ENCODE measurements at regions of chr19 and their contacts with region 1.

Region 1: DNA sequence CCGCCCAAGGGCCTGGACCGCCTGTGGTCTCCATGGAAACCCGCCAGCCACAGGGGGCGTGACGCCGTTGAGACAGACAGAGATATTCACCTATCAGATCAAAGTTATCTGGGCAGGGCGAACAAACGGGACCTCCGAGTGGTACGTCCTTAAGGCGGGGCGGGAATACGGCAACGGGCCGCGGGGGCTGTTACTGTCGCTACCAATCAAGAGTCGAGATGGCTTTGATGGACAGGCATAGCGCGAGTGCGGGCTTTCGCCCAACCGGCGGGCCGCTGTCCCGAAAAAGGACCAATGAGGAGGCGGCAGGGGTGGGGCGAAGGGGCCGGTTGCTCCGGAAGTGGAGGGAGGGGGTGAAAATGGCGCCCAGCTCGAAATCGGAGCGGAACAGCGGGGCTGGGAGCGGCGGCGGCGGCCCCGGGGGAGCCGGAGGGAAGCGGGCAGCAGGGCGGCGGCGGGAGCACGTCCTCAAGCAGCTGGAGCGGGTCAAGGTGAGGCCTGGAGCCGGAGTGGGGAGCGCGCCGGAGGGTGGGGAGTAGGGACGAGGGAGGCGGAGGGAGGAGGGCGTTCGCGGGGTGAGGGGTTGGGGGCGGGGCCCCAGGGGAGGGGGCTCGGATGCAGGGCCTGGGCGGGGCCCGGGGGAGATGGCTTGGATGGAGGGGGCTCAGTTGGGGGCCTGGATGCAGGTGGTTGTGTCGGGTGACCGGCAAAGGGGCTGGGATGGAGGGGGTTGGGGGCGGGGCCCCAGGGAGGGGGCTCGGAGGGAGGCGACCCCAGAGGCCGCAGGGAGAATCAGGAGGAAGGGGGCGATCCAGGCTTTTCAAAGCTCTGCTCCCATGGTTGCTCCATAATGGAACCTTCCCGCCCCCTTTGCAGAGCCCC is at the start of gene DCAF15:
- DNase-seq: peak; percentile 99
- H3K4me3 ChIP-seq: peak within 1 kb of the TSS; percentile 90
- H3K27ac ChIP-seq: no peak within 1 kb of the TSS
- H3K4me1 ChIP-seq: peaks cover 4% of the 10 kb centered on the region
- H3K27me3 ChIP-seq: no peaks in the 10 kb centered on the region
- CTCF ChIP-seq: no peak
- EP300 ChIP-seq: no peak
- POLR2A ChIP-seq: peak; percentile 37
- total RNA-seq, gene DCAF15: 11.1 to 28.0 (median 23.4) TPM

Region 2: DNA sequence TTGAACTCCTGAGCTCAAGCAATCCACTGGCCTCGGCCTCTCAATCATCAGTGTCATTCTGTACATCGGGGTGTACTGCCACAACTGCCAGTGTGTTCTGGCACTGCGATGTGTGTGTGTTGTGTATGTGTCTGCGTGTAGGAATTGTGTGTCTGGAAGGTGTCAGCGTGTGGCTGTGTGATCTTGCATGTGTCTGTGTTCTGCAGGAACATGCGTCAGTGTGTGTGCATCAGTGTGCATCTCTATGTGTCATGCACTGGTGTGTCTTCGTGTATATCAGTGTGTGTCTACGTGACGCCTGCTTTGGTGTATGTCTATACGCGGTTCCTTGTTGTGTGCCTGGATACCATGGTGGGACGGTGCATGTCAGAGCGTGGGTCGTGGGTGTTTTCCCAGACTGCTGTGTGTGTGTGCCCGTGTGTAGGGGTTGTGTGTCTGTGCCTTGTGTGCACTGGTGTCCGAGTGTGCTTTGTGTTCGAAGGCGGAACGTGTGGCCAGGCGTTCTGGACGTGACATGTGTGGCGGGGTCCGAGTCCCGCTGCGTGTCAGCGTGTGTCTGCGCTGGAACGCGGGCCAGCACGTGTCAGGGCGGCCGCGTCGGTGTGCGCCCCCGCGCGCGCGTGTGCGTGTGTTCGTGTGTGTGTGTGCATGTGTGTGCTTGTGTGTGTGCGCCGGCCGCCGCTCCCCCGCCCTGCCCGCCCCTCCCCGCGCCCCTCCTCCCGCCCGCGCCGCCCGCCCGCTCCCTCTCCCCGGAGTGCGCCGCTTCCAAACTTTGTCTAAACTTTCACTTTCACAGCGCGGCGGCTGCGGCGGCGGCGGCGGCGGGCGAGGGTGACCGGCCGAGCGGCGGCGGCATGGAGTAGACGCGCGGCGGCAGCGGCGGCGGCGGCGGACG is 957.4 kb before region 1 on chr19 and contains the start of gene NFIX:
- intact Hi-C with region 1: loop called in 1 of 4 experiments (anchors 5 kb)
- DNase-seq: peak; percentile 76 to 85 (median 82)
- H3K4me3 ChIP-seq: peak within 1 kb of the TSS; percentile 74
- H3K27ac ChIP-seq: peak within 1 kb of the TSS; percentile 78 to 92
- H3K4me1 ChIP-seq: peaks cover 9% of the 10 kb centered on the region
- H3K27me3 ChIP-seq: no peaks in the 10 kb centered on the region
- CTCF ChIP-seq: no peak
- EP300 ChIP-seq: no peak
- POLR2A ChIP-seq: no peak
- total RNA-seq, gene NFIX: 30.3 to 256 (median 223) TPM

Region 3: DNA sequence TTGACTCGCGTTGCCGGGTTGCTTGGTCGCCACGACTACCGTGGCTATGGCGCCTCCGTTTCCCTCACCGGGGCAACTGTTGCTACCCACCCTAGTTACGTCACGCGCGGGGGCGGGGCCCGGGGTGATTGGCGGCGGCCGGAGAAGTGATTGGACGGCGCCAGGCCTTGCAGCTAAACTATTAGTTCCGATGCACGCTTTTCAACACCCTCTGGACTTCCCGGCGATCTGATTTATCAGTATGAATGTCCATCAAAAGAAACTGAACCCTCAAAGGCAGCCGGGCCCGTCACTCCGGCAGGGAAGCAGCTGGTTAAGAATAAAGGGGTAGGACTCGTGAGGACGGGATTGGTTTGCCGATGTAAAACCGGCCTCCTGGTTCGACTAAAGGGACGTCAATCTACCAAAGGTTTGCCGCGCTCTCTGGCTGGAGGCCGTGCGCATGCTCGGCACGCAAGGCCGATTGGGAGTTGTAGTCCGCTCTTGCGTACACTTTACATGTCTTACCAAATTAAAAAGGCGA is 53.9 kb after region 1 on chr19 and contains the start of gene RFX1:
- intact Hi-C with region 1: loop called in 1 of 4 experiments (anchors 5 kb)
- DNase-seq: peak; percentile 100
- H3K4me3 ChIP-seq: peak within 1 kb of the TSS; percentile 97
- H3K27ac ChIP-seq: peak within 1 kb of the TSS; percentile 92 to 97
- H3K4me1 ChIP-seq: no peaks in the 10 kb centered on the region
- H3K27me3 ChIP-seq: no peaks in the 10 kb centered on the region
- CTCF ChIP-seq: no peak
- EP300 ChIP-seq: peak; percentile 21
- POLR2A ChIP-seq: peak; percentile 0
- total RNA-seq, gene RFX1: 2.4 to 16.1 (median 14.7) TPM